K562 (cell line): ENCODE measurements at regions of chrX and their contacts with region 1.

Region 1: DNA sequence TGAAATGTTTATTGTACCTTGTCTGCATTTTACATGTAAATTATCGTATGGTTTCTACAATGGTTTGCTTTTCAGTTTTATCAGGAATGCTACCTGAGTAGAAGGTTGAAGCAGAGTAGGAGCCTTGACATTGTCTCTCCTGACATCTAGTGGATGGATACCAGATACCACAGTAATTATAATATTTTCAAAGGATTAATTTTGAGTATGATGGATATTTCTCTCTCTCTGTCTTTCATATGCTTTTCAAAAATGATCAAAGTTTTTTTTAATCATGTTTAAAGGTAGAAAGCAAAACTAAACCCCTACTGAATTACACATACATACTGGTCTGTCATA is 109.4 kb upstream of the KLHL13 start:
- DNase-seq: peak in 3 of 4 experiments; percentile 6 to 12 (median 8)
- ATAC-seq: peak; percentile 70
- H3K4me3 ChIP-seq: no peak overlapping the region
- H3K27ac ChIP-seq: no peak overlapping the region
- H3K4me1 ChIP-seq: no peaks in the 10 kb centered on the region
- H3K27me3 ChIP-seq: no peaks in the 10 kb centered on the region
- CTCF ChIP-seq: peak; percentile 9 to 48 (median 21); a peak in 3 of 6 replicates
- EP300 ChIP-seq: no peak
- POLR2A ChIP-seq: no peak
- RAD21 ChIP-seq: peak; percentile 40 to 69; a peak in 3 of 4 replicates

Region 2: DNA sequence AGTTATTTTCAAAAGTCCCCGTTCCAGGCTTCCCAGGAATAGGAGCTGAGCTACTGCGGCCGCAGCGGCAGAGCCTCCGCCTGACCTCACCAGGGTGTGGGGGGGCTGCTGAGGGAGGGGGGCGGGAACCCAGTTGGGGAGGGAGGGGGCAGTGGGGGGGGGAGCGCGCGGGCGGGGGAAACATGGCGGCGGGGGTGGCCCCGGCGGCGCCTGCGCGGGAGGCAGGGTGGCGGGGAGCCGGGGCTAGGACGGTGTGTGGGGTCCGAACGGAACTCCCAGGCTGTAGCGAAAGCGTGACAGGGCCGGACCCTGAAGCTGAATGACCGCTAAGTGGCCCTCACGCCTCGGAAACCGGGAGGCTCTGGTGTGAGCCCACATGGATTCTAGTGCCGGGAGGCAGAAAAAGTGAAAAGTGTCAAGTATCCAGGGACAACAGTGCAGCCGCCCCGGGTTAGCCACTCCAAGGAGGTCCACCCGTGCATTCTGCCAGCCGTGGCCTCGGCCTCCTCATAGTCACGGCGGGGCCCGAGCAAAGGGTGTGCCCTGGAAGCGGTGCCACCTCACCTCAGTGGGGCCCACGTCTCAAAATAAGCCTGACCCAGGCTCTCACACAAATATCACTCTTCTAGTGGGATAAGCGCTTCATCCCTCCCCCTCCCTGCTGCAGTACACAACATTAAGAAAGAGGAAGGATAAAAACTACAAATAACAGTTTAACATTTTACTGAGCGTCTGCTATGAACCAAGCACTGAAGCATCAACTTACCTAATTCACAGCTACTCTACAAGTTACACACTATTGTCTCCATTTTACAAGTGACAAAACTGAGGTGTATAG is 109.1 kb before region 1 on chrX and contains the start of gene KLHL13:
- CTCF ChIA-PET with region 1: no interaction called
- POLR2A ChIA-PET with region 1: no interaction called
- in situ Hi-C with region 1: no loop called
- intact Hi-C with region 1: loop called (anchors 10 kb)
- DNase-seq: peak; percentile 48 to 81 (median 80)
- ATAC-seq: peak; percentile 87
- H3K4me3 ChIP-seq: peak within 1 kb of the TSS; percentile 45
- H3K27ac ChIP-seq: peak within 1 kb of the TSS; percentile 48; the same call in 1 of the 3 replicates
- H3K4me1 ChIP-seq: peaks cover 0 to 13% of the 10 kb centered on the region in 2 experiments; a peak in 2 of 5 replicates
- H3K27me3 ChIP-seq: no peaks in the 10 kb centered on the region
- CTCF ChIP-seq: no peak
- EP300 ChIP-seq: no peak
- POLR2A ChIP-seq: 0 out of 2 replicates have a peak, but pooled peaks have one; percentile 28
- RAD21 ChIP-seq: no peak
- polyA plus RNA-seq, gene KLHL13: 1.7 to 2.1 TPM

Region 3: DNA sequence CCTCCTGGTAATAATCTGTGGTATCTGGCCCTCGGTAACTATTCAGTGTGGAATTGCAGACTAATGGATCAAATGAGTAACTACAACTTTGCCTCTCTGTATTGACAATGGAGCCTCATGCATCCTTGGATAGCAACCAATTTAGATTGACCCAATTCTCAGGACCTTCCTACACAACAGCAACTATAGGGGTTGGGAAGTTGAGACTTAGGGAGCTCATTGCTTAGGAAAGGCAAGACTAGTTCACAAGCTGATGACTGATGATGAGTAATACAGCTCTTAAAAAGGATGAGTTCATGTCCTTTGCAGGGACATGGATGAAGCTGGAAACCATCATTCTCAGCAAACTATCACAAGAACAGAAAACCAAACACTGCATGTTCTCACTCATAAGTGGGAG is 61.9 kb before region 1 on chrX:
- CTCF ChIA-PET with region 1: no interaction called
- POLR2A ChIA-PET with region 1: no interaction called
- in situ Hi-C with region 1: no loop called
- intact Hi-C with region 1: no loop called
- DNase-seq: no peak
- ATAC-seq: no peak
- H3K4me3 ChIP-seq: no peak overlapping the region
- H3K27ac ChIP-seq: no peak overlapping the region
- H3K4me1 ChIP-seq: no peaks in the 10 kb centered on the region
- H3K27me3 ChIP-seq: no peaks in the 10 kb centered on the region
- CTCF ChIP-seq: no peak
- EP300 ChIP-seq: no peak
- POLR2A ChIP-seq: no peak
- RAD21 ChIP-seq: no peak